ENCODE measurements at regions of chr4 and their contacts with region 1.

Region 1: DNA sequence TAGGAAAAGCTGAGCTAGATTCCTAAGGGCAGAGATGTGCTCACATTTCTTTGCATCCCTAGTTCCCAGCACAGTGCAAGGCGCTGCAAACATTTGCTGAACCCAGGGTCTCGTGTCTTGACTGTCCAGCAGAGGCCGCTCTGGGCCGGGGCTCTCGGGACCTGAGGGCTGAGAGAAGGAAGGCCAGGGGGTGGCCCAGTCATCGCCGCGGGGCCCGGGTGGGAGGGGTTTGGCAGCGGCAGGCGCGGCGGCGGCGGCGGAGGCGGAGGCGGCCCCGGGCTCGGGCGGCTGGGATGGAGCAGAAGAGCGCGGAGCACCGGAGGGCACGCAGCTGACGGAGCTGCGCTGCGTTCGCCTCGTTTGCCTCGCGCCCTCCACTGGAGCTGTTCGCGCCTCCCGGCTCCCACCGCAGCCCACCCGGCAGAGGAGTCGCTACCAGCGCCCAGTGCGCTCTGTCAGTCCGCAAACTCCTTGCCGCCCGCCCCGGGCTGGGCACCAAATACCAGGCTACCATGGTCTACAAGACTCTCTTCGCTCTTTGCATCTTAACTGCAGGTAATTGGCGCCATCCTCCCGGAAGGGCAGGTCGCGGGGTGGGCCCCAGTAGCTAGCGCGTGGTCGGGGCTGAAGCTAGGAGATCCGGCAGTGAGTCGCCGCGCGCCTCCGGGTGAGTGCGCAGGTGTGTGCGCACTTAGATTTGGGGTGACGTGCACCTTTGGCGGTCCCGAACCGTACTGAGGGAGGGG is at the start of gene PARM1:
- DNase-seq: peak; percentile 78 to 85
- ATAC-seq: peak; percentile 80 to 81
- H3K4me3 ChIP-seq: peak within 1 kb of the TSS; percentile 67 to 83 (median 78)
- H3K27ac ChIP-seq: peak within 1 kb of the TSS; percentile 71 to 83 (median 78)
- H3K4me1 ChIP-seq: no peaks in the 10 kb centered on the region
- H3K27me3 ChIP-seq: no peaks in the 10 kb centered on the region
- CTCF ChIP-seq: peak; percentile 81 to 86 (median 84)
- POLR2A ChIP-seq: peak; percentile 65 to 86
- total RNA-seq, gene PARM1: 9.3 to 13.1 (median 10.3) TPM

Region 2: DNA sequence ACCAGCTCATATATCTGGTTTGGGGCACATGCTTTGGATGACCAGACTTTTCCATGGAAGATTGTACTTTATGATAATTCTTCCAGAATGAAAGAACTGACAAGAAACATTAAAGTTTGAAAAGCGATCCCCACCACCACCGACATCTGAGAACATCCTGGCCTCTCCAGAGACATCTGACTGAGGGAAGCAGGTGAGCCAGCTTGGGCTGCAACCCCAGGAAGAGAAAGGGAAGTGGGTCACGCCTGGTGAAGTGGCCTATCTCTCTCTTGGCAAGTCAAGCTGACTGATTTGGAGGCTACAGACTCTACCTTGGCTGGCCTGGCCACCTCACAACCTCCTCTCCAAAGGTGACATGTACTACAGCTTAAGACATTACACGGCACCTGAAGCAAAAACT is 20.7 kb after region 1 on chr4:
- in situ Hi-C with region 1: no loop called
- intact Hi-C with region 1: loop called (anchors 2 kb)
- DNase-seq: peak; percentile 43 to 64
- ATAC-seq: peak; percentile 95 to 97
- H3K4me3 ChIP-seq: no peak overlapping the region
- H3K27ac ChIP-seq: peak overlapping the region; percentile 56 to 74 (median 68)
- H3K4me1 ChIP-seq: peaks cover 27 to 38% of the 10 kb centered on the region in 2 donors
- H3K27me3 ChIP-seq: no peaks in the 10 kb centered on the region
- CTCF ChIP-seq: no peak
- POLR2A ChIP-seq: no peak

Region 3: GRCh38 chr4:75004755-75005668 is 72.0 kb after region 1 on chr4:
- in situ Hi-C with region 1: no loop called
- intact Hi-C with region 1: loop called (anchors 2 kb)
- DNase-seq: peak; percentile 89 to 95
- ATAC-seq: peak; percentile 96 to 97
- H3K4me3 ChIP-seq: peak overlapping the region in 1 of 4 donors; percentile 35
- H3K27ac ChIP-seq: peak overlapping the region; percentile 82 to 85 (median 83)
- H3K4me1 ChIP-seq: peaks cover 22 to 32% of the 10 kb centered on the region in 2 donors
- H3K27me3 ChIP-seq: no peaks in the 10 kb centered on the region
- CTCF ChIP-seq: no peak
- POLR2A ChIP-seq: no peak

Region 4: GRCh38 chr4:75107755-75108612 is 175.0 kb after region 1 on chr4:
- in situ Hi-C with region 1: loop called in 2 of 4 experiments (anchors 25 kb)
- intact Hi-C with region 1: no loop called
- DNase-seq: no peak
- ATAC-seq: no peak
- H3K4me3 ChIP-seq: no peak overlapping the region
- H3K27ac ChIP-seq: no peak overlapping the region
- H3K4me1 ChIP-seq: no peaks in the 10 kb centered on the region
- H3K27me3 ChIP-seq: no peaks in the 10 kb centered on the region
- CTCF ChIP-seq: no peak
- POLR2A ChIP-seq: no peak

Region 5: GRCh38 chr4:75126058-75126457 is 193.1 kb after region 1 on chr4:
- in situ Hi-C with region 1: loop called in 3 of 4 experiments (anchors 10 to 25 kb)
- intact Hi-C with region 1: no loop called
- DNase-seq: no peak
- ATAC-seq: no peak
- H3K4me3 ChIP-seq: no peak overlapping the region
- H3K27ac ChIP-seq: no peak overlapping the region
- H3K4me1 ChIP-seq: no peaks in the 10 kb centered on the region
- H3K27me3 ChIP-seq: no peaks in the 10 kb centered on the region
- CTCF ChIP-seq: no peak
- POLR2A ChIP-seq: no peak

Region 6: GRCh38 chr4:75207882-75208281 is 274.9 kb after region 1 on chr4:
- in situ Hi-C with region 1: no loop called
- intact Hi-C with region 1: no loop called
- DNase-seq: no peak
- ATAC-seq: no peak
- H3K4me3 ChIP-seq: no peak overlapping the region
- H3K27ac ChIP-seq: no peak overlapping the region
- H3K4me1 ChIP-seq: no peaks in the 10 kb centered on the region
- H3K27me3 ChIP-seq: no peaks in the 10 kb centered on the region
- CTCF ChIP-seq: no peak
- POLR2A ChIP-seq: no peak

Region 7: DNA sequence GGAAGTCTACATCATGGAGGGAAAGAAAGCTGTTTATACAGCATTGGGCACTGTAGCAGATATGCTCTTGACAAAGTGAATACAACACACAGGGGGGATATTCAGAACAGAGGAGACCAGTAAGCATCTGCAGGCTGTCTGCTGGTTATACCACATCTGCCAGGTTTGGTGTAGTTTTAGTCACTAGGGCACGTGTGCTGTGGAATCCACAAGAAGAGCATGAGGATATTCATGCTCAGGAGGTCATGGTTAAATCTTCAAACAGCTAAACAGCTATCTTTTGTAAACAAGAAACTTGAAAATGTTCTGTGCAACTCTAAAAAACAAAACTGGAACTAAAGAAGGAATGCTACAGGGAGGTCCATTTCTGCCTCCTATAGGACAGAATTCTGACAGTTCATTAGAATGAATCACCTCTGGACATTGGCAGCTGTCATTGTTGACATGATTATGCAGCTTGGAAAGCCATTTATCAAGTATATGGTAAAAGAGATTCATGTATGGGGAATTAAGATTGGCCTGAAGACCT is 405.4 kb after region 1 on chr4:
- in situ Hi-C with region 1: no loop called
- intact Hi-C with region 1: no loop called
- DNase-seq: no peak
- ATAC-seq: no peak
- H3K4me3 ChIP-seq: no peak overlapping the region
- H3K27ac ChIP-seq: no peak overlapping the region
- H3K4me1 ChIP-seq: no peaks in the 10 kb centered on the region
- H3K27me3 ChIP-seq: no peaks in the 10 kb centered on the region
- CTCF ChIP-seq: no peak
- POLR2A ChIP-seq: no peak

Region 8: GRCh38 chr4:75514131-75514948 is 581.4 kb after region 1 on chr4 and contains the starts of genes RCHY1 and THAP6:
- in situ Hi-C with region 1: no loop called
- intact Hi-C with region 1: loop called (anchors 10 kb)
- DNase-seq: peak; percentile 95
- ATAC-seq: peak; percentile 96 to 98
- H3K4me3 ChIP-seq: peak within 1 kb of the TSS; percentile 86 to 93 (median 88)
- H3K27ac ChIP-seq: peak within 1 kb of the TSS; percentile 95 to 96 (median 95)
- H3K4me1 ChIP-seq: peaks cover 50 to 57% of the 10 kb centered on the region in 2 donors
- H3K27me3 ChIP-seq: no peaks in the 10 kb centered on the region
- CTCF ChIP-seq: peak in 3 of 5 experiments; percentile 9 to 37 (median 15)
- POLR2A ChIP-seq: peak; percentile 74 to 82
- total RNA-seq, gene RCHY1: 14.0 to 18.7 (median 15.8) TPM
- total RNA-seq, gene THAP6: 6.0 to 27.3 (median 13.9) TPM